ENCODE measurements at regions of chr15 and their contacts with region 1.

Region 1: GRCh38 chr15:38002883-38003477 is 68.5 kb downstream of the TMCO5A start:
- DNase-seq: peak; percentile 61
- ATAC-seq: peak; percentile 92
- H3K4me3 ChIP-seq: no peak overlapping the region
- H3K27ac ChIP-seq: no peak overlapping the region
- H3K4me1 ChIP-seq: no peaks in the 10 kb centered on the region
- H3K27me3 ChIP-seq: no peaks in the 10 kb centered on the region
- CTCF ChIP-seq: peak; percentile 52 to 57 (median 55); a peak in 5 of 6 replicates
- POLR2A ChIP-seq: no peak
- RAD21 ChIP-seq: peak; percentile 78

Region 2: GRCh38 chr15:38354315-38354929 is 351.4 kb after region 1 on chr15:
- CTCF ChIA-PET with region 1: interaction called, 6 read pairs
- POLR2A ChIA-PET with region 1: no interaction called
- RAD21 ChIA-PET with region 1: interaction called in 1 of 2 experiments, 6 read pairs
- intact Hi-C with region 1: loop called (anchors 1 kb)
- DNase-seq: peak; percentile 65
- ATAC-seq: peak; percentile 78
- H3K4me3 ChIP-seq: no peak overlapping the region
- H3K27ac ChIP-seq: no peak overlapping the region
- H3K4me1 ChIP-seq: no peaks in the 10 kb centered on the region
- H3K27me3 ChIP-seq: no peaks in the 10 kb centered on the region
- CTCF ChIP-seq: peak; percentile 41 to 87 (median 77); a peak in 5 of 6 replicates
- POLR2A ChIP-seq: no peak
- RAD21 ChIP-seq: peak; percentile 75

Region 3: GRCh38 chr15:38389924-38390542 is 387.1 kb after region 1 on chr15:
- CTCF ChIA-PET with region 1: interaction called, 4 read pairs
- POLR2A ChIA-PET with region 1: no interaction called
- RAD21 ChIA-PET with region 1: no interaction called
- intact Hi-C with region 1: loop called (anchors 1 kb)
- DNase-seq: peak; percentile 37
- ATAC-seq: peak; percentile 91
- H3K4me3 ChIP-seq: no peak overlapping the region
- H3K27ac ChIP-seq: no peak overlapping the region
- H3K4me1 ChIP-seq: no peaks in the 10 kb centered on the region
- H3K27me3 ChIP-seq: no peaks in the 10 kb centered on the region
- CTCF ChIP-seq: peak; percentile 32 to 90 (median 88); a peak in 5 of 6 replicates
- POLR2A ChIP-seq: no peak
- RAD21 ChIP-seq: peak; percentile 62

Region 4: GRCh38 chr15:38414357-38414756 is 411.4 kb after region 1 on chr15:
- CTCF ChIA-PET with region 1: interaction called, 4 read pairs
- POLR2A ChIA-PET with region 1: no interaction called
- RAD21 ChIA-PET with region 1: no interaction called
- intact Hi-C with region 1: loop called (anchors 1 kb)
- DNase-seq: peak; percentile 23
- ATAC-seq: peak; percentile 98
- H3K4me3 ChIP-seq: no peak overlapping the region
- H3K27ac ChIP-seq: no peak overlapping the region
- H3K4me1 ChIP-seq: no peaks in the 10 kb centered on the region
- H3K27me3 ChIP-seq: peaks cover 13% of the 10 kb centered on the region; the same call in 1 of the 2 replicates
- CTCF ChIP-seq: peak; percentile 40 to 70 (median 66); a peak in 5 of 6 replicates
- POLR2A ChIP-seq: no peak
- RAD21 ChIP-seq: peak; percentile 70